CD4-positive, alpha-beta memory T cell (primary cell): ENCODE measurements at regions of chr2 and their contacts with region 1.

Region 1: GRCh38 chr2:27159271-27159670 is 10.5 kb downstream of the TCF23 start:
- DNase-seq: no peak
- H3K4me3 ChIP-seq: no peak overlapping the region
- H3K4me3 Mint-ChIP-seq: no peak overlapping the region
- H3K27ac ChIP-seq: no peak overlapping the region
- H3K27ac Mint-ChIP-seq: no peak overlapping the region
- H3K4me1 ChIP-seq: no peaks in the 10 kb centered on the region
- H3K4me1 Mint-ChIP-seq: no peaks in the 10 kb centered on the region
- H3K27me3 ChIP-seq: no peaks in the 10 kb centered on the region
- H3K27me3 Mint-ChIP-seq: peaks cover 0 to 7% of the 10 kb centered on the region in 2 donors

Region 2: DNA sequence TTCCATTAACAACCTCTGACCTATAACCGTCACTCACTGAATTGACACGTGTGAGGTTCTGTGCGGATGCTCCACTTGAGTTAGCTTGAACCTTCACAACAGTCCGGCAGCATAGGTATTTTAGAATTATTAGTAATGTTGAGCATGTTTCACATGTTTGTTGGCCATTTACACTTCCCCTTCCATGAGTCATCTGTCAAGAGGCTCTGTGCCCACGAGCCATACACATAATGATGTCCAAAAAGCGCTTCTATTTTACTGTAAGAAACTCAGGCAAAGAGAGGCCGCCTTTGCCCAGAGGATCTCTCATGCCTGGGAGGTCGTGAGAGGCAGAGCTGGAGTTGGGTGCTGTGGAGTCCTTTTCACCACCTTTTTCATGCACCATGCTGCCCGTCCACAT is 155.4 kb before region 1 on chr2:
- CTCF ChIA-PET with region 1: no interaction called
- POLR2A ChIA-PET with region 1: no interaction called
- intact Hi-C with region 1: no loop called
- DNase-seq: no peak
- H3K4me3 ChIP-seq: no peak overlapping the region
- H3K4me3 Mint-ChIP-seq: no peak overlapping the region
- H3K27ac ChIP-seq: no peak overlapping the region
- H3K27ac Mint-ChIP-seq: no peak overlapping the region
- H3K4me1 ChIP-seq: no peaks in the 10 kb centered on the region
- H3K4me1 Mint-ChIP-seq: no peaks in the 10 kb centered on the region
- H3K27me3 ChIP-seq: no peaks in the 10 kb centered on the region
- H3K27me3 Mint-ChIP-seq: peaks cover 0 to 7% of the 10 kb centered on the region in 2 donors

Region 3: DNA sequence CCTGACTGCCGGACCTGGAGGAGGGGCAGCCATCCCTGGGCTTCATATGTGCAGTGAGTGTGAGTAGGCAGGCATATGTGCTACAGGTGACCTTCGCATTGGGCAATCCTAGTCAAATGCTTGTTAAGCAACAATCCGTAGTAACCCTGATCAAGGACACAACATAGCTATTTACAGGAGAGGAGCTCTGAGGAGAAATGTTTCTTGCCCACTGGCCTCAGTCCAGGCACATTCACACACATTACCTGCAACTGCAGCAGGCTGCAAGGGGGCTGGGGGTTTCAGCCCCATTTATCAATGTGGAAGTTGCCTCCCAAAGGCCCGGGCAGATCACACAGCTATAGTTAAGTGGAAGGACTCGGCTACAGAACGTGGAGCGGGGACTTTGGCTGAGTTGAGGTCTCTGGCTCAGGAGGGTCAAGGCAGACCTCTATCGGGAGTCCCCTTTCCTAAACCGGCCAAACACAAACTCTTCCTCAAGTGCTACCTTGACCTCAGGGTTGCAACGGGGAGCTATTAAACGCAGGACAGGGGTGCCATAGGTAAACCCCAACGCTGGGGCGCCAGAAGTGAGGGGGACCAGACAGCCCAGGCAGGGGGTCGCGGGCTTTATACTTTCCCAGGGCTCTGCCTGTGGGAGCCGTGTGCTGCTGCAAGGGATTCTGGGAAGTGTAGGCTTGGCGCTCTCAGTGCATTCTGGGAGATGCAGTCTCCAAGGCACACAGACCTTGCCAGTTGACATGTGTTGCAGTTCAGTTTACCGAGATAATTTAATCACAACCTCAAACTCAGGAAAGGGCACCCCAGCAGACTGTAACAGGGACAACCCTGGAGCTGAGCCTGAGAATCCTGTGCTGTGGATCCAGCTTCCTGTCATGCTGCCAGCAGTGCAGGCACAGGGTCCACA is 63.3 kb before region 1 on chr2:
- CTCF ChIA-PET with region 1: no interaction called
- POLR2A ChIA-PET with region 1: no interaction called
- intact Hi-C with region 1: no loop called
- DNase-seq: peak in 3 of 5 donors; percentile 34 to 39 (median 37)
- H3K4me3 ChIP-seq: no peak overlapping the region
- H3K4me3 Mint-ChIP-seq: peak overlapping the region in 7 of 8 donors; percentile 5 to 81 (median 61)
- H3K27ac ChIP-seq: no peak overlapping the region
- H3K27ac Mint-ChIP-seq: peak overlapping the region in 4 of 7 donors; percentile 35 to 84 (median 53)
- H3K4me1 ChIP-seq: peaks cover 9% of the 10 kb centered on the region
- H3K4me1 Mint-ChIP-seq: peaks cover 8 to 16% (median 10%) of the 10 kb centered on the region in 4 donors
- H3K27me3 ChIP-seq: no peaks in the 10 kb centered on the region
- H3K27me3 Mint-ChIP-seq: no peaks in the 10 kb centered on the region

Region 4: GRCh38 chr2:27133905-27134780 is 25.1 kb before region 1 on chr2 and contains the start of gene PREB:
- CTCF ChIA-PET with region 1: no interaction called
- POLR2A ChIA-PET with region 1: no interaction called
- intact Hi-C with region 1: no loop called
- DNase-seq: peak; percentile 94 to 98 (median 98)
- H3K4me3 ChIP-seq: peak within 1 kb of the TSS; percentile 52 to 89
- H3K4me3 Mint-ChIP-seq: peak within 1 kb of the TSS; percentile 92 to 99 (median 96)
- H3K27ac ChIP-seq: peak within 1 kb of the TSS; percentile 92
- H3K27ac Mint-ChIP-seq: peak within 1 kb of the TSS; percentile 80 to 99 (median 98)
- H3K4me1 ChIP-seq: peaks cover 26% of the 10 kb centered on the region
- H3K4me1 Mint-ChIP-seq: peaks cover 12 to 36% (median 26%) of the 10 kb centered on the region in 4 donors
- H3K27me3 ChIP-seq: no peaks in the 10 kb centered on the region
- H3K27me3 Mint-ChIP-seq: no peaks in the 10 kb centered on the region
- total RNA-seq, gene PREB: 64.5 to 65.3 TPM

Region 5: DNA sequence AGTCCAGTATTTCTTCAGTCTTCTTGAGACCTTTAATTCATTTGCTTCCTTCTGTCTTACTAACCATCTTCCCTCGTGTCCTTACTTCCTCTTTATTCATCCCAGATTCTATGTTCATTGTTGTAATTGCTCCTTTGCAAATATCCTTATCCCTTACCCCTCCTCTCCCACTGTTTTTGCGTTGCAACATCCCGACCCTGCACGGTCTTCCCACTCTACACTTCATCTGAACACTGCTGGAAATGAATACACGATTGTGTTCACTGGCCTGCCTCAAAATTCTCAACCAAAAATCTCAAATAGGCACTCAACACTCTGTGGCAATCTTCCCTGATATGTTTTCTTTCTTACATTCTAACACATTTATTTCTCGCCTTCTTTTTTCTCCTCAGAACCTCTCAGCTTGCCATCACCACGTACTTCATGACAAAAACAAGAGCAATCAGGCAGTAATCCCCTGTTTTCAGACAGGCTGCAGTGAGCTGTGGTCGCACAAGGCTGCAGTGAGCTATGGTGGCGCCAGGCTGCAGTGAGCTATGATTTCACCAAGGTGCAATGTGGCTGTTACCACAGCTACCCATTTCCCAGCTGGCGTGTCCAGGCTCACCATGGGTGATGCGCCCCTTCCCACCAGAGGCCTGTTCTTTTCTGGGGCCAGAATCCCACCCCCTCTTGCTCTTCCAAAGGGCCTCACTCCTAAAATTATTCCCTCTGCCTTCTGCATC is 15.2 kb after region 1 on chr2:
- CTCF ChIA-PET with region 1: interaction called, 13 read pairs
- POLR2A ChIA-PET with region 1: no interaction called
- intact Hi-C with region 1: no loop called
- DNase-seq: no peak
- H3K4me3 ChIP-seq: no peak overlapping the region
- H3K4me3 Mint-ChIP-seq: no peak overlapping the region
- H3K27ac ChIP-seq: no peak overlapping the region
- H3K27ac Mint-ChIP-seq: no peak overlapping the region
- H3K4me1 ChIP-seq: no peaks in the 10 kb centered on the region
- H3K4me1 Mint-ChIP-seq: peaks cover 4 to 6% (median 6%) of the 10 kb centered on the region in 4 donors
- H3K27me3 ChIP-seq: no peaks in the 10 kb centered on the region
- H3K27me3 Mint-ChIP-seq: peaks cover 24 to 28% of the 10 kb centered on the region in 2 donors

Region 6: DNA sequence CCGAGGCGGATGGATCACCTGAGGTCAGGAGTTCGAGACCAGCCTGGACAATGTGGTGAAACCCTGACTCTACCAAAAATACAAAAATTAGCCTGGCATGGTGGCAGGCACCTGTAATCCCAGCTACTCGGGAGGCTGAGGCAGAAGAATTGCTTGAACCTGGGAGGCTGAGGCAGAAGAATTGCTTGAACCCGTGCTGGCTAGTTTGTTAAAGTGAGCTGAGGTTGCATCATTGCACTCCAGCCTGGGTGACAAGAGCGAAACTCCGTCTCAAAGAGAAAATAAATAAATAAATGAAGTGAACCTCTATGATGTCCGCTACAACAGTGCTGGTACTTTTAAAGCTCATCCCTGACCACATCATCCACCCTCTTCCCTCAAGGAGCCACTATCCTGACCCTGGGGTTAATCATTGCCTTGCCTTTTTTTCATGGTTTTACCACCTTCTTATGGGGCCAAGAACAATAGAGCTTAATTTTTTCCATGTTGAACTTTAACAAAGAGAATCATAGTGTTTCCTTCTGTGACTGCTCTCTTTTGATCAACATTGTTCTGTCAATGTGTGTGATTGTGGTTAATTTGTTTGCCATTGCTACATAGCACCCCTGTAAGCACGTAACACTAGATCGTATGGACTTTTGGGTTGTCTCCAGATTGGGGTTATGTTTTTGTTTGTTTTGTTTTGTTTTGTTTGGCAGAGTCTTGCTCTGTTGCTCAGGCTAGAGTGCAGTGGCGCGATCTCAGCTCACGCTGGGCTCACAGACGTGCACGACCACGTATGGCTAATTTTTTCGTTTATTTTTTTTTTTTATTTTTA is 35.5 kb after region 1 on chr2:
- CTCF ChIA-PET with region 1: no interaction called
- POLR2A ChIA-PET with region 1: no interaction called
- intact Hi-C with region 1: no loop called
- DNase-seq: no peak
- H3K4me3 ChIP-seq: no peak overlapping the region
- H3K4me3 Mint-ChIP-seq: no peak overlapping the region
- H3K27ac ChIP-seq: no peak overlapping the region
- H3K27ac Mint-ChIP-seq: no peak overlapping the region
- H3K4me1 ChIP-seq: no peaks in the 10 kb centered on the region
- H3K4me1 Mint-ChIP-seq: no peaks in the 10 kb centered on the region
- H3K27me3 ChIP-seq: no peaks in the 10 kb centered on the region
- H3K27me3 Mint-ChIP-seq: peaks cover 3 to 5% of the 10 kb centered on the region in 2 donors